OCI-LY7 (cell line): ENCODE measurements at regions of chr13 and their contacts with region 1.

Region 1: DNA sequence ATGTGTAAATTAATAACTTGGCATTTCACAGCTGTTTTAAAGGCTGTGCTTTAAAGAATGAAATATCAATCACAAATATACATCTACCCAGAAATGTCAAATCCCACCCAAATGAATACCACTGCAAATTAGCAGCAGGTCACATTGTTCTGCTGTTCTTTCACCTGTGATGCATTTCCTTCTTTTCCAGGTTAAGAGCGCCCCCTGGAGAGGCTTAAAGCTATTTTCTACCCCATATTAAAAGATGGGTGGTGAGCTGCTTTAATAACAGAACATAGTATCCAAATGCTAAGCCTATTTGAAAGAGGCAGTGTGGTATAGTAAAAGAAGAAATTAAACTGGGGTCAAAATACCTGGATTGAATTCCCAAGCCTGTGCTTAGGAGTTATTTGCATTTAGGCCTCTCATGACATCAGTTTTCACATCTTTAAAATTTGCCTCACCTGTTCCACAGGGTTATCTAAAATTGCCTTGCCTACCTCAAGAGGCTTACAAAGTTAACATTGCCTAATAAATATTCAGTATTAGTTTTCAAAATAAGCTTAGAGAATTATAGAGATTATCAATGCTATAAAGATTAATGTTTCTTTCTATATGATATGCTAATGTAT is 396.9 kb upstream of the SLITRK5 start:
- DNase-seq: peak; percentile 76
- H3K4me3 ChIP-seq: no peak overlapping the region
- H3K27ac ChIP-seq: no peak overlapping the region
- H3K4me1 ChIP-seq: no peaks in the 10 kb centered on the region
- CTCF ChIP-seq: peak; percentile 98

Region 2: GRCh38 chr13:86870444-86870843 is 403.9 kb before region 1 on chr13:
- CTCF ChIA-PET with region 1: no interaction called
- POLR2A ChIA-PET with region 1: interaction called, 3 read pairs
- intact Hi-C with region 1: loop called (anchors 1 kb)
- DNase-seq: peak; percentile 37
- H3K4me3 ChIP-seq: no peak overlapping the region
- H3K27ac ChIP-seq: no peak overlapping the region
- H3K4me1 ChIP-seq: no peaks in the 10 kb centered on the region
- CTCF ChIP-seq: peak; percentile 97